Ovary (tissue), 10 donors: ENCODE measurements at regions of chr2 and their contacts with region 1.

Region 1: DNA sequence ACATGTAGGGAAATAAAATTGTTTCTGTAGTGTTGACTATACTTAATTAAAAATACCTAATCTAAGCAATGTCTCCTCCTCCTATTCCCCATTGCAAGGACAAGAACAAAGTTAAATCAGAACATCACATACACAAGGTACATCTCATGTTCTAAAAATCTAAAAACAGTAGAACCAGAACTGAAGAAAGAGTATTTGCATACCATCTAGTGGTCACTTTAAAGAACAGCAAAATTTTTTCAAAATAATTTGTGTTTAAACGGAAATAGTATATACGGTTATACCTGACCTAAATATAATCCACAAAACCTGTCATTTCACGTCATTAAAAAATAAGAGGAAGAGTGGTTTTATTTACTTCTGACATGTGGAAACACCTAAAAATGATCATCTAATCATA is 294.3 kb upstream of the KCNH7 start:
- DNase-seq: no peak
- H3K4me3 ChIP-seq: no peak overlapping the region
- H3K27ac ChIP-seq: no peak overlapping the region
- H3K4me1 ChIP-seq: no peaks in the 10 kb centered on the region
- H3K27me3 ChIP-seq: no peaks in the 10 kb centered on the region
- CTCF ChIP-seq: peak in 2 of 3 donors; percentile 21 to 44
- EP300 ChIP-seq: no peak
- POLR2A ChIP-seq: no peak

Region 2: GRCh38 chr2:161870401-161870930 is 1262.4 kb before region 1 on chr2:
- intact Hi-C with region 1: no loop called
- DNase-seq: no peak
- H3K4me3 ChIP-seq: no peak overlapping the region
- H3K27ac ChIP-seq: no peak overlapping the region
- H3K4me1 ChIP-seq: no peaks in the 10 kb centered on the region
- H3K27me3 ChIP-seq: no peaks in the 10 kb centered on the region
- CTCF ChIP-seq: no peak
- EP300 ChIP-seq: no peak
- POLR2A ChIP-seq: no peak

Region 3: DNA sequence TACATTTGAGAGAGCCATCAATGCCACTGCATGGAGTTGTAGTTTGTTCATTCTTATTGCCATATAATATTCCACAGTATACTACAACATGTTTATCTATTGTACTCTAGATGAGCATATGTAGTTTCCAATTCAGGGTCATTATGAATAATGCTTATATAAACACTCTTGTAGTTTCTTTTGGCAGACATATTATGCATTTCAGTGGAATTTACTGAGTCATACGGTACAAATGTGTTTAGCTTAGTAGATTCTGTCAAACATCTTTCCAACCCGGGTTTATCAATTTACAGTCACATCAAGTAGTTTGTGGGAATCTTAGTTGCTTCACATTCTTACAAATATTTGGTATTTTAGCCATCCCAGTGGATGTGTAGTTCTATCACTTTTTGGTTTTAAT is 455.4 kb before region 1 on chr2:
- intact Hi-C with region 1: no loop called
- DNase-seq: no peak
- H3K4me3 ChIP-seq: no peak overlapping the region
- H3K27ac ChIP-seq: no peak overlapping the region
- H3K4me1 ChIP-seq: no peaks in the 10 kb centered on the region
- H3K27me3 ChIP-seq: no peaks in the 10 kb centered on the region
- CTCF ChIP-seq: no peak
- EP300 ChIP-seq: no peak
- POLR2A ChIP-seq: no peak

Region 4: GRCh38 chr2:162890690-162891311 is 242.0 kb before region 1 on chr2:
- intact Hi-C with region 1: loop called in 2 of 4 experiments (anchors 10 kb)
- DNase-seq: peak in 1 of 5 donors; percentile 16
- H3K4me3 ChIP-seq: no peak overlapping the region
- H3K27ac ChIP-seq: no peak overlapping the region
- H3K4me1 ChIP-seq: no peaks in the 10 kb centered on the region
- H3K27me3 ChIP-seq: no peaks in the 10 kb centered on the region
- CTCF ChIP-seq: peak in 1 of 3 donors; percentile 51
- EP300 ChIP-seq: no peak
- POLR2A ChIP-seq: no peak